Activated CD4-positive, alpha-beta memory T cell treated with anti-CD3 and anti-CD28 coated beads for 36 hours (primary cell): ENCODE measurements at regions of chr5 and their contacts with region 1.

Region 1: DNA sequence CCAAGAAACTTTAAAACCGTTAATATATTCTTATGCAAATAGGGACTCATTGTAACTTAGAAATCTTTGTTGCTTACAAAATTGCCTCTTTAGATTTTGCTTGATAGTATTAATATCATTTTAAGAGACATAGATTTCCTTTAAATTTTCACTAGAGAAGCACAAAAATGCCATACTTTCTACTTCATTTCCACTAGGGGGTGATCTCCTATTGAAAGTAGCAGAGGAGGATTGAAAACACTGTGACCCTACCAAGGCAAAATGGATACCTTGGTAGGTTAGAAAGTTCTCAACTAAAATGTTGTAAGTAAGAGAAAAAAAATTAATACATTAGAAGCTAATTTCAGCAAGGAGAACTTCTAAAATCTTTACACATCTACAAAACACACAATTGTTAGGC is 204.9 kb downstream of the CHSY3 start:
- DNase-seq: no peak
- H3K4me3 Mint-ChIP-seq: no peak overlapping the region
- H3K27ac Mint-ChIP-seq: no peak overlapping the region
- H3K4me1 Mint-ChIP-seq: no peaks in the 10 kb centered on the region
- H3K27me3 Mint-ChIP-seq: no peaks in the 10 kb centered on the region

Region 2: GRCh38 chr5:130198925-130199324 is 89.8 kb after region 1 on chr5:
- CTCF ChIA-PET with region 1: no interaction called
- POLR2A ChIA-PET with region 1: no interaction called
- intact Hi-C with region 1: no loop called
- DNase-seq: no peak
- H3K4me3 Mint-ChIP-seq: no peak overlapping the region
- H3K27ac Mint-ChIP-seq: no peak overlapping the region
- H3K4me1 Mint-ChIP-seq: no peaks in the 10 kb centered on the region
- H3K27me3 Mint-ChIP-seq: peaks cover 7% of the 10 kb centered on the region

Region 3: GRCh38 chr5:131109540-131110255 is 1000.5 kb after region 1 on chr5:
- CTCF ChIA-PET with region 1: interaction called, 5 read pairs
- POLR2A ChIA-PET with region 1: no interaction called
- intact Hi-C with region 1: loop called (anchors 2 kb)
- DNase-seq: no peak
- H3K4me3 Mint-ChIP-seq: no peak overlapping the region
- H3K27ac Mint-ChIP-seq: no peak overlapping the region
- H3K4me1 Mint-ChIP-seq: peaks cover 3% of the 10 kb centered on the region
- H3K27me3 Mint-ChIP-seq: no peaks in the 10 kb centered on the region